ENCODE measurements at regions of chr15 and their contacts with region 1.

Region 1: DNA sequence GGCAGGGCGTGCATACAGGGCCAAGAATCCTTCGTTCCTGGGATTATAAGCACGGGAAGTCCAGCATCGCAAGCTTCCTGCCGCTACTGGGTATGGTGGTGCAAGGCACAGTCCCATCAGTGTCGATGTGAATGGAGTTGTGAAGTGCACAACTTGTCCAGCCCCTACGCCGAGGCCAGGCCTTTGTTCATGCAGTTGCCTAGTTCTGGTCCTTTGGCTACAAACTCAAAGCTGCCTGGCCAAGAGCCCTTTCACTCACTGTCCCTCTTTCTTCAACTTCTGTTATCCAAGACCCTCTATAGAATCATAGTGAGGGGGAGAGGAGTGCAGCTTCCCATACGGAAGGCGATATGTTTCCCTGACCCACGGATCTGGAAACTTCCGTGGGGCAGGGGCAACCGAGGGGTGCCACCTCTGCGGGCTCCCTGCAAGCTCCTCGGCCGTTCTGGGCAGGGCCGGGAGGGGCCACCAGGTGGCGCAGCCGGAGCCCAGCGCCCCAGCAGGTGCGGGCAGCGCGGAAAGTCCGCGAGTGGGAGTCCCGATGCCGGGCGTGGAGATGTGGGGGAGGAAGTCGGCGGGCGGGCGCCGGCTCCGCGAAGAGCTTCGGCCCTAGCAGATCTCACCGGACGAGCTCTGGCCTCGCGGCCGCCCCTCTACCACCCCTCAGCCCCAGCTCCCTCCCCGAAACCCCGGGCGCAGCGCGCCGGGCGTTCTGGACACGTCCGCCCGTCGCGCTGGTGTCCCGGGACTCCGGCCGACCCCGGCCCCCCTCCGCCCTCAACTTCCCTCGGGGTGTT is 693 bp downstream of the RASGRP1 start:
- DNase-seq: no peak
- H3K4me3 ChIP-seq: peak overlapping the region; percentile 64
- H3K27me3 ChIP-seq: peaks cover 9% of the 10 kb centered on the region
- CTCF ChIP-seq: peak; percentile 84

Region 2: DNA sequence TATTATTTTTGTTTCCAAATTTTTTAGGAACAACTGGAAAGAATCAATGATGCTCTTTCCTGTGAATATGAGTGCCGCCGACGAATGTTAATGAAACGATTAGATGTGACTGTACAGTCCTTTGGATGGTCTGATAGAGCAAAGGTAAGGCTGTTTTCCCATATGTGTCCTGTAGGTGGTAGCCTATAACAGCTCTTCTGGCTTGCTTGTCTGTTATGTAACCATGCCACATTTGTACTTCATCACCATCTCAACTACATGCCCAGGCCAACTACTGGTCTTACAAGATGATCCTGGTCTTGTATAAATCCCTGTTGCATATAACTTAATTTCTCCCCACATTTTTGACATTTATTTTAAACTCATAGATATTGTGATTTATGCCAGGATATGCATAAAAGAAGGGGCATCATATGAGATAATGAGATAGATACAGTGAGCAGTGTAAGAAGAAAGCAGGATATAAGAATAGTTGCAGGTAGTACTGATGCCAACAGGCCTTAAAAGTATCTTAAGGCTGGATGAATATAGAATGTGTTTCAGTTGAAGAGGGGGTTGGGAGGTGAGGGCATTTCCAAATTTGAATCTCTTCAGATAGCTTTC is 89.7 kb before region 1 on chr15:
- CTCF ChIA-PET with region 1: interaction called, 14 read pairs
- POLR2A ChIA-PET with region 1: interaction called, 4 read pairs
- DNase-seq: peak; percentile 26
- H3K4me3 ChIP-seq: no peak overlapping the region
- H3K27me3 ChIP-seq: no peaks in the 10 kb centered on the region
- CTCF ChIP-seq: peak; percentile 71

Region 3: DNA sequence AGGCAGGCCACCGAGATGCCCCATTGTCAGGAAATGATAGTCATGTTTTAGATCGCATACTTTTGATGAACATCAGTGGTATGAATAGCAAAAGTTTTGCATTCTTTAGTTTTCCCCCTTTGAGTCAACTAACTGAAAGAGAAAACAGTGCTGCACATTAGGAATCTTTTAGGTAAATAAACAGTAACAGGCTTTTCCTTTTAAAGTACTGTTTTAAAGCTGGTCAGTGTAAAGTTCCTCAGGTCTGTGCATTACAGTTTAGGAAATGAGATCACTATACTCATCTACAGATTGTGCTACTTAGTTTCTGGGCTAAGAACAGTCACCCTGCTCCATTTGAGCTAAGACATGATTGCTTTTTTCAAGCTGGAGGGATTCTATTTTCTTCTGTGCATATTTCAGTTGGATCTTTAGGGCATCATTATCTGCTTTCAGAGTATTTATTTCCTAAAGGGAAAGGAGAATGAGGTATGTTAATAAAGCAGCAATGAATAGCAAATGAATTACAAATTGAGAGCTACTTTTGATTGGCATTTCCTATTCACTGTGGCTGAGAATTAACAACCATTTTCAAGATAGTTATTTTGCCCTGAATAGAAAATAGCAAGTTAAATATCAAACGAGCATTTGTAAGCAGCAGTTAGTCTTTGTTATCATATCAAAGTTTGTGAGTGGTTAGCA is 73.5 kb before region 1 on chr15:
- CTCF ChIA-PET with region 1: interaction called, 19 read pairs
- POLR2A ChIA-PET with region 1: no interaction called
- DNase-seq: peak; percentile 44
- H3K4me3 ChIP-seq: no peak overlapping the region
- H3K27me3 ChIP-seq: no peaks in the 10 kb centered on the region
- CTCF ChIP-seq: no peak

Region 4: GRCh38 chr15:38536201-38536676 is 27.7 kb before region 1 on chr15:
- CTCF ChIA-PET with region 1: interaction called, 11 read pairs
- POLR2A ChIA-PET with region 1: no interaction called
- DNase-seq: peak; percentile 97
- H3K4me3 ChIP-seq: no peak overlapping the region
- H3K27me3 ChIP-seq: no peaks in the 10 kb centered on the region
- CTCF ChIP-seq: no peak

Region 5: DNA sequence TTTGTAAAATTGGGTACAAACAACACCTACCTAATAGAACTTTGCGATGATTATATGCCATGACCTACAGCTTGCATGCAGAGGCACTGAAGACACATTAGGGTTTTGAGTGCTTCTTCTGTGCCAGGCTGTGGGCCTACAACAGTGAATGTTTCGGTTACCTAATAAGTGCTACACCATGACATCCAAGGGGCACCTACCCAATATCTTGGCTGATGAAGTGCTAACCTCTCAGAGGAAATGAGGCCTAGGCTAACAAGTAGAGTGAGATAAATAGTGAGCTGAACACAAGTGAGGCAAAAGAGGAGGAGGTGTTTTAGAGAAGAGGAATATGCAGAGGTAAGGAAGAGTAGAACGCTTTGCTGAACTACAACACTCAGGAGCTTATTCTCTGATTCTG is 12.9 kb after region 1 on chr15:
- CTCF ChIA-PET with region 1: interaction called, 11 read pairs
- POLR2A ChIA-PET with region 1: no interaction called
- DNase-seq: no peak
- H3K4me3 ChIP-seq: no peak overlapping the region
- H3K27me3 ChIP-seq: peaks cover 11% of the 10 kb centered on the region
- CTCF ChIP-seq: no peak

Region 6: DNA sequence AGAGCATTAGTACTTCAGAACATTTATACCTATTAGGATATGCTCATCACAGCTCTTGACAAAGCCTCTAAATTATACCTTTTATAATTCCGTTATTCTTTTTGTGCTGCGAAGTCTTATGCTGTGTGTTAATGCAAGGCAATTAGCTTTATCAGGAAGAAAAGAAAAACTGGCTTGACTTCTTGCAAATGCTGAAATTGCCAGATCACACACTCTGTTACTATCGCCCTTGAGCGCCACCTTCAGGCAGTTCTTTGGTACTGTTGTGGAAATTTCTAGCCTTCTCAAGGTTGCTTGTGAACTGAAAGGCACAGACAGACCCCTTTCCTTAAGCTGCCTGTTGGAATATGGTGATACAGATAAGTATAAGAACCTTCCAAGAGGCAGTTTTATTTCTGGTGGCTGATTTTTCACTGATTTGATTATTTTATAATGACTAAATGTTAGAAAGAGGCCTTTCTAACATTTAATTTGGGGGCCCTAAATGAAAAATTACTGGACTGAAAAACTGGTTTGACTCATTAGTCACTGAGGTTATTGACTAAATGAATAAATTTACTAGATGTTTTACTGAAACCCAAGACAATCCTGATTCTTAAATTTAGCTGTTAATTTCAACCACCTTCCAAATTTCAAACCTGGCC is 126.9 kb after region 1 on chr15:
- CTCF ChIA-PET with region 1: interaction called, 26 read pairs
- POLR2A ChIA-PET with region 1: no interaction called
- DNase-seq: no peak
- H3K4me3 ChIP-seq: no peak overlapping the region
- H3K27me3 ChIP-seq: no peaks in the 10 kb centered on the region
- CTCF ChIP-seq: peak; percentile 80

Region 7: DNA sequence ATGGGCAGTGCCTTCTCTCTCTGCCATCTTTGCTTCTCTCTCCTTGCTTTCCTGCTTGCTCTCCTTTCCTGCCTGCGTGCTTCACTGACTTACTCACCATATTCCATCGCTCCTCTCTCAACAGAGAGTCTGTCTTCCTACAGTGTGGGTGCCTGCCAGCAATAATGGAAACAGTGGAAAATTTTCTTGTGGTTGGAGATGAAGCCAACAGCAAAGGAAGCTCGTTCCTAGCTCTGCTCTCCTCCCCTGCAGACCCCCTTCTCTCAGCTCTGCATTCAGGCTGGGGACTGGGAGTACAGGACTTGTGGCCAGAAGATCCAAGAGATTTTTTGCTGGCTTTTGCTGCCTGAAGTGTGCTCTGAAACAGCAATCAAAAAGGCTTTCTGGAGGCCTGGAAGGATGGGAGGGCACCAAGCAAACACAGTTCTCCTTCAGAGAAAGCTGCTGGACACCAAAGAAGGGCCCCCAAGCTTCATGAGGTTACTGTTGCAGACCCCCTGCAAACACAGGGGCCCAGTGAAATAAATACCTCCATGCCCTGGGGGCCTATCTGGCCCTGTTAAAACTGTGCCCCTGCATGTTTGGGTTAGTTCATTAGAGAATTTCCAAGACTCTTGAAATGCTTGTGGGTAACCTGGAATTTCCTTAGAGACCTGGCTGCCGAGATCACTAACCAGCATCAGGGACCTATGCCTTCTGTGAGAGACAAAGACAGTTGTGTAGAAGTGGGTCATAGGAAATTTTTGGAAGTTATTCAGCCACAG is 150.6 kb after region 1 on chr15:
- CTCF ChIA-PET with region 1: no interaction called
- POLR2A ChIA-PET with region 1: no interaction called
- DNase-seq: peak; percentile 94
- H3K4me3 ChIP-seq: no peak overlapping the region
- H3K27me3 ChIP-seq: no peaks in the 10 kb centered on the region
- CTCF ChIP-seq: no peak